ENCODE measurements at regions of chr10 and their contacts with region 1.

Region 1: GRCh38 chr10:59625721-59626522 is 83.7 kb downstream of the SLC16A9 start:
- DNase-seq: peak; percentile 30
- ATAC-seq: peak; percentile 94
- H3K4me3 Mint-ChIP-seq: no peak overlapping the region
- H3K27ac Mint-ChIP-seq: no peak overlapping the region
- H3K4me1 Mint-ChIP-seq: peaks cover 2% of the 10 kb centered on the region
- H3K27me3 Mint-ChIP-seq: no peaks in the 10 kb centered on the region
- CTCF ChIP-seq: peak; percentile 77

Region 2: DNA sequence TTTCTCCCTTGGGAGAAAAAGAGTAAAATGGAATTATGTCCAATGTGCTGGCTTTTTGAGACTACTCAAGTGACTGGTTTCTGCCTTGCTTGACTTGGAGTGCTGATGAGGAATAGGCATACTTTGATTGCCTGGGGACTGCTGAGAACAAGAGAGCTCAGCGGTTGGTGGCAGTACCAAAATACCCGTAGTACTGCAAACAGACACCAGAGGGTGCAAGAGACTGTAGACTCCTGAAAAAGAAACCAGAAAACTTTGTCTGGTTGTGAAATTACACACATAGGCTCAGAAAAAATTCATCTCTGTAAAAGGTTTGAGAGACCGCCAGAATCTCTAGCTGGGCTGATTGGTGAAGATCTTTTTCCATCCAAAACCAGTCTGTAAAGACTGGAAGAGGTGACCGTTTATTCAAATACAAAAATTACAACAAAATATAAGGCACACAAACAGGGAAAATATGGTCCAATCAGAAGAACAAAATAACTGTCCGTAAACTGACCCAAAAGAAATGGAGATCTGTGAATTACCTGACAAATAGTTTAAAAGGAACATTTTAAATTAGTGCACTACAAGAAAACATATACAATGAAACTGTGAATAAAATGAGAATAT is 1094.7 kb before region 1 on chr10:
- CTCF ChIA-PET with region 1: interaction called, 13 read pairs
- POLR2A ChIA-PET with region 1: no interaction called
- intact Hi-C with region 1: no loop called
- DNase-seq: peak; percentile 70
- ATAC-seq: peak; percentile 80
- H3K4me3 Mint-ChIP-seq: no peak overlapping the region
- H3K27ac Mint-ChIP-seq: no peak overlapping the region
- H3K4me1 Mint-ChIP-seq: no peaks in the 10 kb centered on the region
- H3K27me3 Mint-ChIP-seq: peaks cover 8% of the 10 kb centered on the region
- CTCF ChIP-seq: peak; percentile 68

Region 3: DNA sequence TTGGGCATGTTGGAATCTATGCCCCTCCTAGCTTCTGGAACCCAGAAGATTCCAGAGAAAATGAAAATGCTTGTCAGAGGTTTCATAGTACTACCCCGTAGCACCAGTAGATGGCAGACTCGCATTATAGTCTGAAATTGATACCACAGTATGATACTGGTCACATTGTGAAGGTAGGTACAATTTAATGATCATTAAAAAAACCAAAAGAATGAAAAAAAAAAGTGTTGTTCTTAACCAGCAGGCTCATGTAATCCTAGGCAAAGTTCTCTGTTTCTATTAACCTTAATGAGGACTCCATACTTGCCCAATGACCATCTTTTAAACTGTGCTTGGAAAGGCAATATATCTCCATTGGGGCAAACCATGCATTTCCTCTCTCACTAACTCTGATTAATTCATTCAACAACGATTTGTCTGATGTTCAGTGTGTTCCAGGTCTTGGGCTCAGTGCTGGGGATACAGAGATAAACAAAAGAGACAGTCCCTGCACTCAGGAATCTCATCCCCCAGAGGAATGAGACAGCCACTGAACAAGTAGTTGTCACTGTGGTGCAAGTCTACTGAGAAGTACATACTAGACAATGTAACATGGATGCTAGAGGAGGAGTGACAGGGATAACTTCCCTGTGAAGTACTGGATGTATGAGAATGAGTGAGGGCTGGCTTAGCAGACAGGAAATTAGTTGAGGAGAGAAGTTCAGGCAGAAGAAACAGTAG is 673.0 kb before region 1 on chr10:
- CTCF ChIA-PET with region 1: interaction called, 5 read pairs
- POLR2A ChIA-PET with region 1: no interaction called
- intact Hi-C with region 1: loop called (anchors 5 kb)
- DNase-seq: peak; percentile 12
- ATAC-seq: no peak
- H3K4me3 Mint-ChIP-seq: no peak overlapping the region
- H3K27ac Mint-ChIP-seq: no peak overlapping the region
- H3K4me1 Mint-ChIP-seq: no peaks in the 10 kb centered on the region
- H3K27me3 Mint-ChIP-seq: peaks cover 2% of the 10 kb centered on the region
- CTCF ChIP-seq: peak; percentile 70

Region 4: GRCh38 chr10:59606551-59606961 is 19.4 kb before region 1 on chr10:
- CTCF ChIA-PET with region 1: interaction called, 13 read pairs
- POLR2A ChIA-PET with region 1: no interaction called
- intact Hi-C with region 1: no loop called
- DNase-seq: no peak
- ATAC-seq: no peak
- H3K4me3 Mint-ChIP-seq: no peak overlapping the region
- H3K27ac Mint-ChIP-seq: no peak overlapping the region
- H3K4me1 Mint-ChIP-seq: no peaks in the 10 kb centered on the region
- H3K27me3 Mint-ChIP-seq: peaks cover 2% of the 10 kb centered on the region
- CTCF ChIP-seq: no peak

Region 5: GRCh38 chr10:59808896-59809643 is 183.1 kb after region 1 on chr10:
- CTCF ChIA-PET with region 1: interaction called, 24 read pairs
- POLR2A ChIA-PET with region 1: no interaction called
- intact Hi-C with region 1: loop called (anchors 2 kb)
- DNase-seq: peak; percentile 88
- ATAC-seq: peak; percentile 98
- H3K4me3 Mint-ChIP-seq: no peak overlapping the region
- H3K27ac Mint-ChIP-seq: no peak overlapping the region
- H3K4me1 Mint-ChIP-seq: no peaks in the 10 kb centered on the region
- H3K27me3 Mint-ChIP-seq: no peaks in the 10 kb centered on the region
- CTCF ChIP-seq: peak; percentile 68

Region 6: GRCh38 chr10:59830601-59831259 is 204.8 kb after region 1 on chr10:
- CTCF ChIA-PET with region 1: interaction called, 12 read pairs
- POLR2A ChIA-PET with region 1: no interaction called
- intact Hi-C with region 1: no loop called
- DNase-seq: peak; percentile 41
- ATAC-seq: peak; percentile 30
- H3K4me3 Mint-ChIP-seq: no peak overlapping the region
- H3K27ac Mint-ChIP-seq: no peak overlapping the region
- H3K4me1 Mint-ChIP-seq: peaks cover 43% of the 10 kb centered on the region
- H3K27me3 Mint-ChIP-seq: no peaks in the 10 kb centered on the region
- CTCF ChIP-seq: peak; percentile 73

Region 7: DNA sequence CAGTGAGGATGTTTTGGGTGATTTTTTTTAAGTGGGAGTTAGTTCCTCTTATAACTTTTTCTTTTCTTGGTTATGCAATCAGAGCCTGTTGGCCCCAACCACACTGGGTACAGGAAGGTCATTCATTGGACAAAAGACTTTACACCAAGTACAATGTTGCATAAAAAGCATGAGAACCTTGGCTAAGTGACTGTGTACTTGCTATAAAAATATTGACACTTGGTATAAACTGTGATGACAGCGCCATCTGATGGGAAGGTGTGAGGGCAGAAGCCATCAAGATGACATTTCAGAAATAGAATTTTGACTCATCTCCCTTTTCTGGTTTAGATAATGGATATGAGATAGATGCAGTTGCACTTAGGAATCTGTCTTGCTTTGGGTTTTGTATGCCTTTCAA is 406.8 kb after region 1 on chr10:
- CTCF ChIA-PET with region 1: interaction called, 13 read pairs
- POLR2A ChIA-PET with region 1: no interaction called
- intact Hi-C with region 1: loop called (anchors 1 kb)
- DNase-seq: peak; percentile 77
- ATAC-seq: peak; percentile 76
- H3K4me3 Mint-ChIP-seq: no peak overlapping the region
- H3K27ac Mint-ChIP-seq: no peak overlapping the region
- H3K4me1 Mint-ChIP-seq: peaks cover 4% of the 10 kb centered on the region
- H3K27me3 Mint-ChIP-seq: no peaks in the 10 kb centered on the region
- CTCF ChIP-seq: peak; percentile 55